HEK293 (cell line): ENCODE measurements at regions of chr19 and their contacts with region 1.

Region 1: DNA sequence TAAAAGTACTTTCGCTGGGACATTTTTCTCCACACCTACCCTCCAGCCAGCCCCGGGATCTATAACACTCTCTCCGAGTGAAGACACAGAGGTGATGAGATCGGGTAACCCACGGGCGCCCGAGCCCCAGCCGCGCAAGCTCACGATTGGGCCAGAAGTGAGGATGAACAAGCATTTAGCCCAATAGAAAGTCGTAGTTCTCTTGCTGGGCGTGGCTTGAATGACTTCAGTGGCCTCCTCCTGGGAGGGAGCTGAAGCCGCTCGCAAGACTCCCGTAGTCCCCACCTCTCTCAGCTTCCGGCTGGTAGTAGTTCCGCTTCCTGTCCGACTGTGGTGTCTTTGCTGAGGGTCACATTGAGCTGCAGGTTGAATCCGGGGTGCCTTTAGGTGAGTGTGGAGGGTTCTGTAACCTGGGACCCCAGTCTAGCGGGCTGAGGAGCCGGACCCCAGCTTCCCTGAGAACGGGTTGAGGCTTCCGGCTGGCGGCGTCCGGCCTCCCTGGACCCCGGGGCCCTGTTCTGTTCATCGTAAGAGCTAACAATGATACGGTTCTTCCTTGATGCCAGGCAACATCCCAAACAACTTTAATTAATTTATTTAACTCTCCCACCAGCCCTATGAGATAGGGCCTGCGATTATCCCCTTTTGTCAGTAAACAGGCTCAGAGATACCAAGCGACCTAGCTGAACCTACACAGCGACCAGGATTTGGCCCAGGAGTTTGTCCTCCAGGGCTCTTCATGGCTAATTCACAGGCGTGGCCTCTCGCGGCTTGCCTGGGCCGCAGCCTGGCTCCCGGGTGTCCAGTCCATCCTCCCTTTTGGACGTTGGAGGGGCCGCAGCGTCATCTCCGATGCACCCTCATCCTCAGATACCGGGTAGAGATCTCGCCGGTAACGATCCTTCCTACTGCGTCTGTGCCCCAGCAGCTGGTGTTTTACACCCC is at the start of gene COX6B1:
- H3K4me3 ChIP-seq: peak within 1 kb of the TSS; percentile 70
- H3K27ac ChIP-seq: peak within 1 kb of the TSS; percentile 63
- H3K4me1 ChIP-seq: peaks cover 25% of the 10 kb centered on the region
- CTCF ChIP-seq: no peak; the same call in 1 of the 2 replicates

Region 2: DNA sequence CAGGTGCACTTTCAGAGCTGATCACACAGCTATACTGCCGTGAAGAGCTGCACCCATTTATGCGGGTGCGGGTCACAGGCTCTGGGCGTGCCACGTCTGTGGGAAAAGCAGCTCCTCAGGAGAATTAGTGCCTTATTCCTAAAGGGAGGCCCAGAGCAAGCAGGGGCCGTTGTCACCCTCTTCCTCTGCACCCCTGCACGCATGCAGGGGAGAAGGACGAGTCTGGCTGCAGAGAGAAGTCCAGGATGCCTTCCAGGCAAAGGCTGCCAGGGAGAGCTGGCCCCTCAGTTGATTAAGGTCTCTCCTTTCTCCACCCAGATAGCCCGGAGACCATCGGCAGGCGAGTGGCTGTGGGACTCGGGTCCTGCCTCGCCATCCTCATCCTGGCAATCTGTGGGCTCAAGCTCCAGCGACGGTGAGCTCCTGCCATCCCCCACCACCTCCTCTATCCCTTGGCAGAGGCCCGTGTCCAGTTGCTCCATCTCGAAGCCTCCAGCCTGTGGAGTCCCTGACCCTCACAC is 303.7 kb before region 1 on chr19:
- CTCF ChIA-PET with region 1: no interaction called
- POLR2A ChIA-PET with region 1: no interaction called
- H3K4me3 ChIP-seq: no peak overlapping the region
- H3K27ac ChIP-seq: no peak overlapping the region
- H3K4me1 ChIP-seq: no peaks in the 10 kb centered on the region
- CTCF ChIP-seq: no peak

Region 3: GRCh38 chr19:35557539-35558399 is 90.5 kb before region 1 on chr19:
- CTCF ChIA-PET with region 1: interaction called, 10 read pairs
- POLR2A ChIA-PET with region 1: interaction called, 12 read pairs
- H3K4me3 ChIP-seq: peak overlapping the region; percentile 22
- H3K27ac ChIP-seq: no peak overlapping the region
- H3K4me1 ChIP-seq: peaks cover 10% of the 10 kb centered on the region
- CTCF ChIP-seq: no peak

Region 4: GRCh38 chr19:35623327-35624010 is 24.8 kb before region 1 on chr19:
- CTCF ChIA-PET with region 1: no interaction called
- POLR2A ChIA-PET with region 1: interaction called, 16 read pairs
- H3K4me3 ChIP-seq: no peak overlapping the region
- H3K27ac ChIP-seq: peak overlapping the region; percentile 46; the same call in 1 of the 2 replicates
- H3K4me1 ChIP-seq: peaks cover 6% of the 10 kb centered on the region
- CTCF ChIP-seq: no peak

Region 5: DNA sequence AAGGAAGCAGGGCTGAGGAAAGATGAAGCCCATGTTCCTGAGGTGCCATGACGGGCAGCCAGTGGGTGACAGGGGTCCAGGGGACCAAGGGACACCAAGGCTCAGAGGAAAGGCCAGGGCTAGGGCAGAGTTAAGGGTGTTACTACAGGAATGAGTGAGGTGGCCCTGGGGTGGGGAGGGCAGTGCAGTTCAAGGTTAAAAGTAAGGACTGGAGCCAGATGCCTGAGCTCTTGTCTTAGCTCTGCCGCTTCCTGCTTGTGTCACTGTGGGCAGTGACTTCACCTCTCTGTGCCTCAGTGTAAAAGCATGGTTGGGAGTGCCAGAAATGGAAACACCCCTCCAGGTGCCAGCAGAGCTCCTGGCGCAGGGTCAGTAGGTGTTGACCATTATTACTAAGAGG is 11.6 kb before region 1 on chr19:
- CTCF ChIA-PET with region 1: no interaction called
- POLR2A ChIA-PET with region 1: interaction called, 42 read pairs
- H3K4me3 ChIP-seq: no peak overlapping the region
- H3K27ac ChIP-seq: no peak overlapping the region
- H3K4me1 ChIP-seq: peaks cover 10% of the 10 kb centered on the region; the same call in 1 of the 2 replicates
- CTCF ChIP-seq: no peak

Region 6: DNA sequence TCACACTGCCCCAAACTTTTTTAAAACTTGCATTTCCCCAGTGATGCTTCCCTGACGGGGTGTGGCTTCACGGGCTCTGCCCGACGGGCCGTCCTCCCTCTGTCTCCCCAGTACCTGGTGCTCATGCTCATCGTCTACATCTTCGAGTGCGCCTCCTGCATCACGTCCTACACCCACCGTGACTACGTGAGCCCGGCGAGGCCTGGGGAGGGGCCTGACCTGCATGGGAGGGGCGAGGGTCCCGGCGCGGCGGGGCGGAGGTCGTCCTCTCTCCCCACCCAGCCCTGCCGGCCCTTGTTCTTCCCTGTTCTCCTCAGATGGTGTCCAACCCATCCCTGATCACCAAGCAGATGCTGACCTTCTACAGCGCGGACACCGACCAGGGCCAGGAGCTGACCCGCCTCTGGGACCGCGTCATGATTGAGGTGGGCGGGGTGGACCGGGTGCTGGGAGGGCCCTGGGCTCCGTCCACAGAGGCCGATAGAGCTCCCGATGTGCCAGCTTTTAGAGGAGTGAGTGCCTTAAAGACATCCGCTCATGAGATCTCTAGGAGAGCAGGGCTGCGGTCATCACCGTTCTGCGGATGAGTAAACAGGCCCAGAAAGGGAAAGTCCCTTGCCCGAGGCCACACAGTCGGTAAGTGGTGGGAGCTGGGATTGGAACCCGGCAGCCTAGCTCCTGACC is 25.0 kb after region 1 on chr19:
- CTCF ChIA-PET with region 1: no interaction called
- POLR2A ChIA-PET with region 1: interaction called, 25 read pairs
- H3K4me3 ChIP-seq: peak overlapping the region; percentile 33
- H3K27ac ChIP-seq: peak overlapping the region; percentile 41; the same call in 1 of the 2 replicates
- H3K4me1 ChIP-seq: peaks cover 6% of the 10 kb centered on the region
- CTCF ChIP-seq: no peak

Region 7: GRCh38 chr19:35702223-35703012 is 54.1 kb after region 1 on chr19:
- CTCF ChIA-PET with region 1: interaction called, 3 read pairs
- POLR2A ChIA-PET with region 1: interaction called, 24 read pairs
- H3K4me3 ChIP-seq: peak overlapping the region; percentile 50
- H3K27ac ChIP-seq: peak overlapping the region; percentile 56
- H3K4me1 ChIP-seq: peaks cover 6% of the 10 kb centered on the region
- CTCF ChIP-seq: peak; percentile 51; the same call in 1 of the 2 replicates